ENCODE measurements at regions of chr5 and their contacts with region 1.

Region 1: DNA sequence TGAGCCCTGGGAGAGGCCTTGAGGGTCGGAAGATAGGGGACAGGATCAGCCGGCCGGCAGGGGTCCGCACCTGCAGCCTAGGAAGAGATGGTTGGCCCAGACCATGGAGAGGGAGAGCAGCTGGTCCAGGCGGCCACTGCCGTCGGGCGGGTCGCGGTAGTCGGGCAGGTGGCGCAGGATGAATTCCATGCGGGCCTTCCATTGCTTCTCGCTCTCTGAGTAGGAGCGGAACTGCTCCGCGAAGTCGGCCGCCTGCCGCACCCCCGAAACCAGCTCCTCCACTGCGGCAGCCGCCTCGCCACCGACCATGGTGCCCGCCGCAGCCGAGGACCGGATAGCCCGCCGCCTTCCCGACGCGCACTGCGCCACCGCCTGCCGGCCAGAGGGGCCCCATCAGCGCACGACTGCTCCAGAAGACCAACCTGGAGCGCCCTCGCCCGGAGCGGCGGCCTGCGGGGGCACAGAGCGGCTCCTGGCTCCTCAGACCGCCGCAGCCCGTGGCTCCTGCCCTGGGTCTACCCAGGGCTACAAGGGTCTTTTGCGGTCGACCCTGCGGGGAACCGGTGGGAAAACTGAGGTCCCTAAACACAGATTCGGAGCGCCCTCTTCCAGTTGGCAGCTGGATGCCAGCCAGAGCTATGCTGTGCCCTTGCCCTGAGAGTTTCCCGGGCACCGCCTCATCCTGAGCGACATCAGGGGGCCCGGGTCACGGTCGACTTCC is at the start of gene CDKN2AIPNL:
- DNase-seq: peak; percentile 84 to 87
- ATAC-seq: peak; percentile 90 to 91
- H3K4me3 ChIP-seq: peak within 1 kb of the TSS; percentile 72 to 90 (median 84)
- H3K27ac ChIP-seq: peak within 1 kb of the TSS; percentile 83 to 94 (median 88)
- H3K4me1 ChIP-seq: peaks cover 25 to 32% of the 10 kb centered on the region in 2 donors
- H3K27me3 ChIP-seq: no peaks in the 10 kb centered on the region
- CTCF ChIP-seq: peak; percentile 77 to 84 (median 80)
- POLR2A ChIP-seq: peak; percentile 31 to 51
- total RNA-seq, gene CDKN2AIPNL: 23.6 to 58.5 (median 37.4) TPM

Region 2: DNA sequence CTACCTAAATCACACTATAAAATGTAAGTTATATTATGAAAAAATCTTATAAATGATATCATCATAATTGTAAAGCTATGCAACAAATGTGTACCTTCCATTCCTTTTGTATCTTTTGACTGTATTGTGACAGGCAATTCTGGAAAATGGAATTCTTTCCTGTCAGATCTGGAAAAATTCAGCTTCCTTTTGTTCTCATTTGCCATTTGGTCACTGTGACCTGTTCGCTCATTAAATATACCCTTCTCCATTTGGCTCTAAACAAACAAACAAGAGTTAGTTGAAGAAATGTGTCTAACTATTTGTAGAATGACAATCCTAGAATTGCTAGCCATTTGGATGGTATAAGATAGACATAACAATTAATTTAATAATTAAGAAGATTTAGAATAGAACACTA is 107.4 kb before region 1 on chr5:
- in situ Hi-C with region 1: no loop called
- intact Hi-C with region 1: loop called (anchors 5 kb)
- DNase-seq: no peak
- ATAC-seq: no peak
- H3K4me3 ChIP-seq: no peak overlapping the region
- H3K27ac ChIP-seq: no peak overlapping the region
- H3K4me1 ChIP-seq: no peaks in the 10 kb centered on the region
- H3K27me3 ChIP-seq: no peaks in the 10 kb centered on the region
- CTCF ChIP-seq: no peak
- POLR2A ChIP-seq: no peak

Region 3: GRCh38 chr5:134436523-134437339 is 25.0 kb after region 1 on chr5:
- in situ Hi-C with region 1: no loop called
- intact Hi-C with region 1: loop called (anchors 2 kb)
- DNase-seq: peak; percentile 90 to 96
- ATAC-seq: peak; percentile 77 to 83
- H3K4me3 ChIP-seq: peak overlapping the region; percentile 25 to 46 (median 32)
- H3K27ac ChIP-seq: peak overlapping the region; percentile 97 to 99 (median 98)
- H3K4me1 ChIP-seq: peaks cover 70 to 72% of the 10 kb centered on the region in 2 donors
- H3K27me3 ChIP-seq: no peaks in the 10 kb centered on the region
- CTCF ChIP-seq: no peak
- POLR2A ChIP-seq: peak; percentile 21 to 52

Region 4: GRCh38 chr5:134451936-134452505 is 40.3 kb after region 1 on chr5:
- in situ Hi-C with region 1: no loop called
- intact Hi-C with region 1: no loop called
- DNase-seq: peak; percentile 69 to 86
- ATAC-seq: peak; percentile 96
- H3K4me3 ChIP-seq: no peak overlapping the region
- H3K27ac ChIP-seq: peak overlapping the region; percentile 49 to 72 (median 59)
- H3K4me1 ChIP-seq: peaks cover 11 to 15% of the 10 kb centered on the region in 2 donors
- H3K27me3 ChIP-seq: no peaks in the 10 kb centered on the region
- CTCF ChIP-seq: no peak
- POLR2A ChIP-seq: no peak

Region 5: GRCh38 chr5:134465816-134466240 is 54.1 kb after region 1 on chr5:
- in situ Hi-C with region 1: no loop called
- intact Hi-C with region 1: loop called (anchors 1 kb)
- DNase-seq: peak; percentile 82 to 93
- ATAC-seq: peak; percentile 68
- H3K4me3 ChIP-seq: peak overlapping the region; percentile 59 to 72 (median 62)
- H3K27ac ChIP-seq: peak overlapping the region; percentile 93 to 99 (median 98)
- H3K4me1 ChIP-seq: peaks cover 26 to 43% of the 10 kb centered on the region in 2 donors
- H3K27me3 ChIP-seq: no peaks in the 10 kb centered on the region
- CTCF ChIP-seq: peak in 3 of 5 experiments; percentile 15 to 27 (median 20)
- POLR2A ChIP-seq: peak; percentile 88 to 92

Region 6: DNA sequence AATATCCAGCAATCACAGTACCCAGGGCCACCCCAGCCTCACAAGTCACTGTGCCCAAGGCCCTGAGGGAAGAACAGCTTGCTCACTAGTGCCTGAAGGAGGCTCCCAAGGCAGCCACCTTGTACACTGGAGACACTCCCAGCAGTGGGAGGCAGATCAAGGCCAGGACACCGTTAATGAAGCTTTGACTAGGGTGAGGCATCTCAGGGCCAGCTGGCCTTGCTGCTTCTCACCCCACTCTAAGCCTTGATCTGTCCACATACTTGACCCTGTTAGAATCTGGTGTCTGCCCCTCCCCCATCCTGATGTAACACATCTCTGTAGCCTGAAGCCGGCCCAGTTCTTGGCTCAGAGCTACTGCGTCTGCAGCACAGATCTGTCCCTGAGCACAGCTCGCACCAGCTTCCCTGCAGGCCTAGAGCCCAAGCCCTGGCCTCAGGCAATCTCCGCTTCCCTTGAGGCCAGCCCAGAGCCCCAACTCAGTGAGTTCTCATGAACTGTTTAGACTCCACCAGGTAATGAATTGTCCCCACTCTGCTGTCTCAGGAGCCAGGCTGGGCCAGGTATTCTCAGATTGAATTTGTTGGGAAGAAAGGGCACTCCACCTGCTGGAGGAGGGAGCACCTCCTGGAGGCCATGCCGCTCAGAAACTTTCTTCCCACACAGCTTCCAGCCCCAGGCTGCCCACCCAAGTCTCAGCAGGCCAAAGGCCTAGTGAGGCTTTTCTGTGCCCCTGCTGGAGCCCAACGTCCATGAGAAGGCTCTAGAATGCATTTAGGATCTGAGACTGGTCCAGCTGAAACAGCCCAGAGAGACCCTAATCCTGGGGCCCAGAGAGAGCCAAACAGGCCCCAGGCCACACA is 100.3 kb after region 1 on chr5:
- in situ Hi-C with region 1: loop called in 3 of 4 experiments (anchors 25 kb)
- intact Hi-C with region 1: loop called (anchors 2 kb)
- DNase-seq: peak; percentile 85 to 96
- ATAC-seq: peak; percentile 84 to 88
- H3K4me3 ChIP-seq: no peak overlapping the region
- H3K27ac ChIP-seq: peak overlapping the region; percentile 79 to 93 (median 85)
- H3K4me1 ChIP-seq: peaks cover 20 to 33% of the 10 kb centered on the region in 2 donors
- H3K27me3 ChIP-seq: no peaks in the 10 kb centered on the region
- CTCF ChIP-seq: peak; percentile 50 to 68 (median 62)
- POLR2A ChIP-seq: peak; percentile 22 to 33

Region 7: GRCh38 chr5:134527146-134527960 is 115.6 kb after region 1 on chr5:
- in situ Hi-C with region 1: loop called in 3 of 4 experiments (anchors 25 kb)
- intact Hi-C with region 1: loop called (anchors 2 kb)
- DNase-seq: peak; percentile 62 to 78
- ATAC-seq: peak; percentile 39 to 42
- H3K4me3 ChIP-seq: peak overlapping the region; percentile 71 to 78 (median 72)
- H3K27ac ChIP-seq: peak overlapping the region; percentile 93 to 97 (median 96)
- H3K4me1 ChIP-seq: peaks cover 44 to 49% of the 10 kb centered on the region in 2 donors
- H3K27me3 ChIP-seq: no peaks in the 10 kb centered on the region
- CTCF ChIP-seq: peak; percentile 96 to 98 (median 97)
- POLR2A ChIP-seq: peak; percentile 54 to 59

Region 8: DNA sequence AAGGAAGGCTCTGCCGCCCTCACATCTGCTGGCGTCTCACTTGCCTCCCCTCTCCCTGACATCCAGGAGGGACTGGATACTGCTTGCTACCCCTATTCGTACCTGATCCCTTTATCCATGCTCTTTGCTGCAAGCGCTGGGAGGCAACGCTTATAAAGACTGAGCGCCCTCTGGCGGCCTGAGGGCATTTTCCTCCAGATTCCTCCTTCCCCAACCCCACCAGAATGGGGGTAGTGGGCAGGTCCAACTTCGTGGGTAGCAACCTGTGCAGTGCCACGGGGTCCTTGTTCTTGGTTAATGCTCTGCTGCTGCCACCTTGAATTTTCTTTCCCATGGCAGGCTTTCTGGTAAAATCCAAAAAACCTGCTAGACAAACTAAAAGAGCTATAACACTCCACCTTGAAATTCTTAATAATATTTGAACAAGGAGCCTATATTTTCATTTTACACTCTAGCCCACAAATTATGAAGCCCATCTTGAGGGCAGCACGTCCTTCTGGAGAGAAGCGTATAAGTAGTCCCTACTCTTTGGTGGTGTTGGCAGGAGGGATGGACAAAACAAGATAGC is 166.2 kb after region 1 on chr5:
- in situ Hi-C with region 1: no loop called
- intact Hi-C with region 1: loop called (anchors 5 kb)
- DNase-seq: peak; percentile 31 to 69
- ATAC-seq: peak; percentile 53 to 57
- H3K4me3 ChIP-seq: no peak overlapping the region
- H3K27ac ChIP-seq: peak overlapping the region in 1 of 4 donors; percentile 7
- H3K4me1 ChIP-seq: peaks cover 27 to 38% of the 10 kb centered on the region in 2 donors
- H3K27me3 ChIP-seq: no peaks in the 10 kb centered on the region
- CTCF ChIP-seq: peak; percentile 80 to 87 (median 86)
- POLR2A ChIP-seq: no peak